BJ (cell line): ENCODE measurements at regions of chr6 and their contacts with region 1.

Region 1: GRCh38 chr6:42166444-42167141 is 6.6 kb upstream of the GUCA1A start:
- DNase-seq: no peak
- H3K4me3 ChIP-seq: no peak overlapping the region
- H3K27me3 ChIP-seq: peaks cover 5% of the 10 kb centered on the region; the same call in 1 of the 2 replicates
- CTCF ChIP-seq: peak; percentile 94

Region 2: GRCh38 chr6:42075159-42075838 is 91.3 kb before region 1 on chr6:
- CTCF ChIA-PET with region 1: interaction called, 121 read pairs
- POLR2A ChIA-PET with region 1: interaction called, 3 read pairs
- DNase-seq: peak; percentile 21
- H3K4me3 ChIP-seq: no peak overlapping the region
- H3K27me3 ChIP-seq: no peaks in the 10 kb centered on the region
- CTCF ChIP-seq: peak; percentile 94

Region 3: DNA sequence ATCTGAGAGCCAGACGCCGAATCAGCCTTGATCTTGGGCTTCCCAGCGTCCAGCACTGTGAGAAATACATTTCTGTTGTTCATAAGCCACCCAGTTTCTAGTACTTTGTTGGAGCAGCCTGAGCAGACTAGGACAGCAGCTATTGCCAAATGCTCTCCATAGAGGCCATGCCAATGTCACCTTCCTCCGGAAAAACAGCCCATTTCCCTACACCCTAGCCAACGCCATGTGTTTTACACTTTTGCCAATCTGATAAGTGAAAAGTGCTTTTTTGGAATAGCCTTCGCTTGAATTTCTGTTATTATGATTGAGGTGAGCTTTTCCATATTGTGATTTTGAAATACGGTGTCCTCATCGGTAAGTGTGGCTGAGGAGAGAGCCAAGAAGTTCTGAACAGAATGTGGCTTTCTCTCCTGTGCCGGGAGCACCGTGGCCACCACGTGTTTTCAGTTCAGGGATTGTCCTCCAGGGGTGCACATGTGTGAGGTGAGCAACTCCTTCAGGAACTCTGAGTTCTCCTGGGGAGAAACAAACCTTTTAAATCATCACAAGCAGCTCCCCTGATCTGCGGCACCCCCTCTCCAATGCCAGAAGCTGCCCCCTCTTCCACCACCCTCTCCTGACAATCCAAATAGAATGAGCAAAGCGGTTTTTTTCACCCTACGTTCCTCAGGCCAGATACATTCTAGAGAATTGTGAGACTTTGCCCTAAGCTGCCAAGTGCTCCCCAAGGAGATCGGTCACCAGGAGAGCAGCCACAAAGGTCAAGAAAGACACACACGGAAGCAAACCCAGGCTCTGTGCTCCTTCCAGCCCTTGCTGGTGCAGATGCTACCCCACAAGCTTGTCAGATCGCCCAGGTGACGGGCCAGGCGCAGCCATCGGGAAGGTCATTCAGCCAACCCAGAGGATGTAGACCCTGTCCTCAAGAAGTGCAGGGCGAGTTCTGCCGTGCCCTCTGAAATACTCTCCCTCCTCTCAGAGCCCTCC is 80.3 kb before region 1 on chr6:
- CTCF ChIA-PET with region 1: interaction called, 121 read pairs
- POLR2A ChIA-PET with region 1: no interaction called
- DNase-seq: no peak
- H3K4me3 ChIP-seq: no peak overlapping the region
- H3K27me3 ChIP-seq: no peaks in the 10 kb centered on the region
- CTCF ChIP-seq: peak; percentile 36

Region 4: GRCh38 chr6:42211726-42212125 is 45.1 kb after region 1 on chr6:
- CTCF ChIA-PET with region 1: interaction called, 49 read pairs
- POLR2A ChIA-PET with region 1: no interaction called
- DNase-seq: no peak
- H3K4me3 ChIP-seq: no peak overlapping the region
- H3K27me3 ChIP-seq: no peaks in the 10 kb centered on the region
- CTCF ChIP-seq: no peak

Region 5: GRCh38 chr6:42217519-42218367 is 51.1 kb after region 1 on chr6 and contains the start of gene MRPS10:
- CTCF ChIA-PET with region 1: interaction called, 49 read pairs
- POLR2A ChIA-PET with region 1: no interaction called
- DNase-seq: peak; percentile 57
- H3K4me3 ChIP-seq: peak within 1 kb of the TSS; percentile 83
- H3K27me3 ChIP-seq: no peaks in the 10 kb centered on the region
- CTCF ChIP-seq: no peak
- polyA plus RNA-seq, gene MRPS10: 26.4 and 43.3 TPM in 2 replicates